Posterior cingulate gyrus (tissue), 11 donors: ENCODE measurements at regions of chr6 and their contacts with region 1.

Region 1: GRCh38 chr6:19804205-19805123 is 32.7 kb upstream of the ID4 start:
- DNase-seq: peak; percentile 87 to 99 (median 95)

Region 2: GRCh38 chr6:19691465-19692167 is 112.8 kb before region 1 on chr6:
- intact Hi-C with region 1: loop called (anchors 10 kb)
- DNase-seq: peak; percentile 18 to 90 (median 45)